ENCODE measurements at regions of chr1 and their contacts with region 1.

Region 1: GRCh38 chr1:45569962-45570581 is 13.8 kb upstream of the NASP start:
- DNase-seq: peak; percentile 81
- ATAC-seq: peak; percentile 95
- H3K4me3 Mint-ChIP-seq: no peak overlapping the region
- H3K27ac Mint-ChIP-seq: peak overlapping the region; percentile 5
- H3K4me1 Mint-ChIP-seq: peaks cover 2% of the 10 kb centered on the region
- H3K27me3 Mint-ChIP-seq: no peaks in the 10 kb centered on the region

Region 2: GRCh38 chr1:45512641-45513054 is 57.4 kb before region 1 on chr1:
- CTCF ChIA-PET with region 1: interaction called, 139 read pairs
- DNase-seq: peak; percentile 77
- ATAC-seq: peak; percentile 64
- H3K4me3 Mint-ChIP-seq: no peak overlapping the region
- H3K27ac Mint-ChIP-seq: no peak overlapping the region
- H3K4me1 Mint-ChIP-seq: peaks cover 7% of the 10 kb centered on the region
- H3K27me3 Mint-ChIP-seq: no peaks in the 10 kb centered on the region

Region 3: GRCh38 chr1:45535988-45536766 is 33.9 kb before region 1 on chr1:
- CTCF ChIA-PET with region 1: interaction called, 17 read pairs
- DNase-seq: no peak
- ATAC-seq: peak; percentile 77
- H3K4me3 Mint-ChIP-seq: no peak overlapping the region
- H3K27ac Mint-ChIP-seq: no peak overlapping the region
- H3K4me1 Mint-ChIP-seq: peaks cover 18% of the 10 kb centered on the region
- H3K27me3 Mint-ChIP-seq: peaks cover 31% of the 10 kb centered on the region

Region 4: GRCh38 chr1:45557422-45557944 is 12.6 kb before region 1 on chr1:
- CTCF ChIA-PET with region 1: interaction called, 33 read pairs
- DNase-seq: no peak
- ATAC-seq: no peak
- H3K4me3 Mint-ChIP-seq: no peak overlapping the region
- H3K27ac Mint-ChIP-seq: peak overlapping the region; percentile 17
- H3K4me1 Mint-ChIP-seq: peaks cover 16% of the 10 kb centered on the region
- H3K27me3 Mint-ChIP-seq: no peaks in the 10 kb centered on the region